Right lobe of liver (tissue), 6 donors: ENCODE measurements at regions of chr13 and their contacts with region 1.

Region 1: GRCh38 chr13:101916108-101916757 is 463.8 kb downstream of the ITGBL1 start:
- DNase-seq: peak in 2 of 3 donors; percentile 46 to 47
- ATAC-seq: peak; percentile 68 to 88 (median 74)
- H3K4me3 ChIP-seq: peak overlapping the region in 2 of 3 donors; percentile 10 to 26
- H3K27ac ChIP-seq: no peak overlapping the region
- H3K4me1 ChIP-seq: peaks cover 0 to 15% (median 0%) of the 10 kb centered on the region in 4 donors
- H3K27me3 ChIP-seq: peaks cover 5 to 18% of the 10 kb centered on the region in 2 donors
- CTCF ChIP-seq: peak in 3 of 4 donors; percentile 32 to 35 (median 33)
- POLR2A ChIP-seq: no peak

Region 2: GRCh38 chr13:101773062-101773461 is 143.2 kb before region 1 on chr13:
- intact Hi-C with region 1: no loop called
- DNase-seq: no peak
- ATAC-seq: peak in 1 of 4 donors; percentile 90
- H3K4me3 ChIP-seq: no peak overlapping the region
- H3K27ac ChIP-seq: no peak overlapping the region
- H3K4me1 ChIP-seq: no peaks in the 10 kb centered on the region
- H3K27me3 ChIP-seq: no peaks in the 10 kb centered on the region
- CTCF ChIP-seq: no peak
- POLR2A ChIP-seq: no peak

Region 3: GRCh38 chr13:101785858-101786257 is 130.4 kb before region 1 on chr13:
- intact Hi-C with region 1: loop called in 1 of 2 experiments (anchors 10 kb)
- DNase-seq: peak; percentile 52 to 69 (median 60)
- ATAC-seq: peak; percentile 76 to 97 (median 90)
- H3K4me3 ChIP-seq: no peak overlapping the region
- H3K27ac ChIP-seq: no peak overlapping the region
- H3K4me1 ChIP-seq: peaks cover 5 to 40% (median 17%) of the 10 kb centered on the region in 4 donors
- H3K27me3 ChIP-seq: no peaks in the 10 kb centered on the region
- CTCF ChIP-seq: peak; percentile 63 to 76 (median 70)
- POLR2A ChIP-seq: no peak